Activated naive CD4-positive, alpha-beta T cell treated with anti-CD3 and anti-CD28 coated beads for 36 hours (primary cell): ENCODE measurements at regions of chr9 and their contacts with region 1.

Region 1: GRCh38 chr9:122264360-122265148 is at the starts of genes MRRF and RBM18:
- DNase-seq: peak; percentile 90
- H3K4me3 Mint-ChIP-seq: peak within 1 kb of the TSS; percentile 97
- H3K27ac Mint-ChIP-seq: peak within 1 kb of the TSS; percentile 96
- H3K4me1 Mint-ChIP-seq: peaks cover 42% of the 10 kb centered on the region
- H3K27me3 Mint-ChIP-seq: no peaks in the 10 kb centered on the region
- total RNA-seq, gene MRRF: 51.0 TPM
- total RNA-seq, gene RBM18: 25.8 to 25.9 TPM

Region 2: DNA sequence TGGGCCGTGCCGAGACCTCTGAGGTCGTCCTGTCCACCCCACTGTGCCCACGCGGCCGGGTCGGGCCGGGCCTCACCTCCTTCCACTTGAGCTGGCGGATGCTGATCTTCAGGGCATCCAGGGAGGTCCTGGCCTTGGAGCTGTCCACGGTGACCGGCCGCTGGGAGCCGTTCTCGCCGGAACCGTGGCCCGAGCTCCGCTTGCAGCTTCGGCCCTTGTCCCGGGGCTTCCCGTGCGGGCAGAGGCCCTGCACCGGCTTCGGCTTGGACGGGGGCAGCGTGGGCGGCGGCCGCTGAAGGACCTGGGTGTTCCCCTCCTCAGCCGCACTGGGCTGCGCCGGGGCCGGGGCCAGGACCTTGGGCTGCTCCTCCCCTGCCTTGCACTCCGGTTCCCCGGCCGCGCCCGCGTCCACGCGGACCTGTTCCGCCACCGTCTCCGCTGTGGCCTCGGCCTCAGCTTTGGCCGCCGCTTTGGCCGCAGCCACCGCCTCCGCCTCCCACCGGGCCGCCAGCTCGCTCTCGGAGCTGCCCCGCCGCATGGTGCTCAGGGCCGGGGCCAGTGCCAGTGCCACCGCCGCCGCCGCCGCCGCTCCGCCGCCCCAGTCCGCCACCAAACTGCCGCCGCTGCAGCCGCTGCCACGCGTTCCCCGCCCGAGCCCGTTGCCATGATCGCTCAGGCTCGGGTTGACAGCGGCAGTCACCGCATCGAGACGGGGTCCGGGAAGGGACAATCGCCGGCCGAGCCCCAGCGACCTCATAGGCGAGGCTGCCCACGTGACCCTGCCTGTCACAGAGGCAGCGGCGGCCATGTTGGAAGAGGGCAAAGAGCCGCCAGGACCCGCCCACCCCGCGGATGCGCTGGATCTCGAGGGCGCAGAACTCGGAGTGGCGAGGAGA is 171.7 kb before region 1 on chr9 and contains the start of gene TTLL11:
- CTCF ChIA-PET with region 1: no interaction called
- intact Hi-C with region 1: loop called (anchors 1 kb)
- DNase-seq: peak; percentile 97
- H3K4me3 Mint-ChIP-seq: peak within 1 kb of the TSS; percentile 85
- H3K27ac Mint-ChIP-seq: no peak within 1 kb of the TSS
- H3K4me1 Mint-ChIP-seq: peaks cover 32% of the 10 kb centered on the region
- H3K27me3 Mint-ChIP-seq: peaks cover 3% of the 10 kb centered on the region
- total RNA-seq, gene TTLL11: 0.84 to 0.86 TPM

Region 3: DNA sequence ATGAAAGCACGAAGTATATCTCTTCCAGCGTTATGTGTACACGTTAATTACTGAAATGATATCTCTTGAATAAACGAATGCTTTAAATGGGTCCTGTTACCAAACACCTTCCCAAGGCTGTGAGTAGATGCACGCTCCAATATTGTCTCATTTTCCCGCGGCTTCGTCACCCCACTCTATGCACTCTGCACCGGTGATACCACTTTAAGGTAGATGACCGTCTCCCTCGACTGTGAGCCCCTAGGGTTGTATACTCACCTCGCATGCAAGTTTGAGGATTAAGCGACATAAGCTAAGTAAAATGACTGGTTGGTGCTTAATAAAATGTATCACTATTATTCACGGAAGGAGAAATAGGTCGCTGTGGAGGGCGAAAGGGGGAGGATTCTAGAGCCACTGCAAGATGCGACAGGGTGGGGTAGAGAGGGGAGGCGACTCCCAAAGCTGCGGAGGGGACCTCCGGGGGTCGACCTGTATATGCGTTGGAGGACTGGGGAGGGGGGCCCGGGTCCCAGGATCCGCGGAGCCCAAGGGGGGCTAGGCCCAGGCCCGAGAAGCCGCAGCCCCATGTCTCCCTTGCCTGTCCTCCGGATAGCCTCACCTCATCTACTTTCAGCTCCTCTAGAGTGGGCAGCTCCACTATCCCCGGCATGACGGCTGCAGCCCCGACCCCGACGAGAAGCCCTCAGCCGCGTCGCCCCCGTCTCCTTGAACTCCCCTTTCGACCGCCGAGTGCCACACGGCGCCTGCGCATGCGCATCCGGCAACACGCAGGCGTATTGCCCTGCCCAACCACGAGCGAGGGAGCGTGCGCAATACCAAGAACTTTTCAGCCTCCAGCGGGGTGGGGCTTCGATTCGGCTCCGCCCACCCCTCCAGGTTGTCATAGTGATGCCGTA is 105.3 kb before region 1 on chr9 and contains the starts of genes MORN5 and NDUFA8:
- CTCF ChIA-PET with region 1: interaction called, 3 read pairs
- intact Hi-C with region 1: loop called (anchors 1 kb)
- DNase-seq: peak; percentile 96
- H3K4me3 Mint-ChIP-seq: peak within 1 kb of the TSS; percentile 99
- H3K27ac Mint-ChIP-seq: peak within 1 kb of the TSS; percentile 86
- H3K4me1 Mint-ChIP-seq: peaks cover 34% of the 10 kb centered on the region
- H3K27me3 Mint-ChIP-seq: peaks cover 6% of the 10 kb centered on the region
- total RNA-seq, gene MORN5: not detected
- total RNA-seq, gene NDUFA8: 45.5 to 47.9 TPM

Region 4: DNA sequence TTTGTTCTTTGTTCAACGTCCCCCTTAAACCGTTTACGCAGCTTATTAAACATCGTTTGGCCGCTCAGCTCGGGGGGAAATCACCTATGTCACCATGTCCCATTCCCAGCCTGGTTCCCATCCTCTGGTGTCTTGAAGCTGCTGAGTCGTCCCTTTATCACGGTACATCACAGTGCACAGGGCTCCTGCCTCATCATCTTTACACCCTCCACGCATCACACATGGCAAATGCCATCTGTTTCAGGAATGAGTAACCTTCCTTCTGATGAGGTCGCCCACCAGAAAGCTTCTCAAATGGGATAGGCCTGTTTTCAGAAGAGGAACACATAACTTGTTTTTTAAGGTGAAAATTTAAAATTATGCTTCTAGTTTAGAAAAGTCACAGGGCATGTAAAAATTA is 27.9 kb before region 1 on chr9:
- CTCF ChIA-PET with region 1: no interaction called
- intact Hi-C with region 1: no loop called
- DNase-seq: no peak
- H3K4me3 Mint-ChIP-seq: no peak overlapping the region
- H3K27ac Mint-ChIP-seq: no peak overlapping the region
- H3K4me1 Mint-ChIP-seq: no peaks in the 10 kb centered on the region
- H3K27me3 Mint-ChIP-seq: no peaks in the 10 kb centered on the region

Region 5: DNA sequence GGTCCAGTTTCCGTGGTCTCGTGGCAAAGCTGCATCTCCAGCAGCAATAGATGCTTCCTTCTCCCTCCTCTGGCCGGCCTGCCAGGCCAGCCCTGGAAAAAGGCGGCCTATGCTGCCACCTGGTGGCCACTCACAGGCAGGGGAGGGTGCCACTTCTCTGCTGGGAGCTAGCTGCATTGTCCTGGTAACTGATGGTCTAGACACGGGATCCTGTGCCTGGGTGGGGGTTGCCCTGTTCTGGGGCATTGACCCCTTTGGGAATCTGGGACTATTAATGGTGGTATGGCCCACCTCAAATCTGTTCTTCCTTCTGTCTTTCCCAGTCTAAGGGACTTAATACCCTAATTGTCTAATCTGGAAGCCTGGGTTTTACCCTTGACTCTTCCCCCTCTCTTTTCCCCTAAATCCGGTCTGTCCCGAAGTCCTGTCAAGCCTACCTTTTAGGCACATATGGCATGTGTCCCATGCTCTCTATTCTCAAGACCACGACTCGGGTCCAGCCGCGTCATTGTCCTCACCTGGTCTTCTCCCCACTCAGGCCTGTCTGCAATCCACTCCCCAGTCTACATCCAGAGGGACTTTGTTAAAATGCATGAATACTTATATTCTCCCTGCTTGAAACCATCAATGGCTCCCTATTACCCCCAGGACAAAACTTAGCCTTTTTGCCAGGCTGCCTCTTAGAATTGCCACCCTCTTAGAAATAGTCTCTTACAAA is 86.2 kb after region 1 on chr9:
- CTCF ChIA-PET with region 1: interaction called, 5 read pairs
- intact Hi-C with region 1: loop called (anchors 1 kb)
- DNase-seq: peak; percentile 82
- H3K4me3 Mint-ChIP-seq: no peak overlapping the region
- H3K27ac Mint-ChIP-seq: no peak overlapping the region
- H3K4me1 Mint-ChIP-seq: peaks cover 2% of the 10 kb centered on the region
- H3K27me3 Mint-ChIP-seq: peaks cover 29% of the 10 kb centered on the region

Region 6: GRCh38 chr9:122931226-122932121 is 666.9 kb after region 1 on chr9 and contains the start of gene ZBTB26:
- CTCF ChIA-PET with region 1: no interaction called
- intact Hi-C with region 1: loop called (anchors 1 kb)
- DNase-seq: peak; percentile 93
- H3K4me3 Mint-ChIP-seq: no peak within 1 kb of the TSS
- H3K27ac Mint-ChIP-seq: peak within 1 kb of the TSS; percentile 84
- H3K4me1 Mint-ChIP-seq: peaks cover 10% of the 10 kb centered on the region
- H3K27me3 Mint-ChIP-seq: no peaks in the 10 kb centered on the region
- total RNA-seq, gene ZBTB26: 5.5 to 5.7 TPM